Naive thymus-derived CD4-positive, alpha-beta T cell (primary cell): ENCODE measurements at regions of chr9 and their contacts with region 1.

Region 1: GRCh38 chr9:89000973-89001916 is 10.0 kb downstream of the S1PR3 start:
- DNase-seq: peak; percentile 55 to 79 (median 72)
- ATAC-seq: peak; percentile 78
- H3K4me3 ChIP-seq: no peak overlapping the region
- H3K4me3 Mint-ChIP-seq: peak overlapping the region in 2 of 10 donors; percentile 14 to 40
- H3K27ac ChIP-seq: no peak overlapping the region
- H3K27ac Mint-ChIP-seq: no peak overlapping the region
- H3K4me1 ChIP-seq: no peaks in the 10 kb centered on the region
- H3K4me1 Mint-ChIP-seq: peaks cover 4 to 12% (median 6%) of the 10 kb centered on the region in 7 donors
- H3K27me3 ChIP-seq: no peaks in the 10 kb centered on the region
- H3K27me3 Mint-ChIP-seq: peaks cover 6 to 44% (median 25%) of the 10 kb centered on the region in 5 donors

Region 2: GRCh38 chr9:88173378-88173999 is 827.8 kb before region 1 on chr9:
- CTCF ChIA-PET with region 1: no interaction called
- POLR2A ChIA-PET with region 1: no interaction called
- intact Hi-C with region 1: loop called in 1 of 2 experiments (anchors 2 kb)
- DNase-seq: peak in 8 of 9 donors; percentile 28 to 64 (median 52)
- ATAC-seq: peak; percentile 72
- H3K4me3 ChIP-seq: no peak overlapping the region
- H3K4me3 Mint-ChIP-seq: no peak overlapping the region
- H3K27ac ChIP-seq: no peak overlapping the region
- H3K27ac Mint-ChIP-seq: no peak overlapping the region
- H3K4me1 ChIP-seq: no peaks in the 10 kb centered on the region
- H3K4me1 Mint-ChIP-seq: peaks cover 0 to 9% (median 2%) of the 10 kb centered on the region in 7 donors
- H3K27me3 ChIP-seq: no peaks in the 10 kb centered on the region
- H3K27me3 Mint-ChIP-seq: peaks cover 0 to 42% (median 7%) of the 10 kb centered on the region in 5 donors

Region 3: DNA sequence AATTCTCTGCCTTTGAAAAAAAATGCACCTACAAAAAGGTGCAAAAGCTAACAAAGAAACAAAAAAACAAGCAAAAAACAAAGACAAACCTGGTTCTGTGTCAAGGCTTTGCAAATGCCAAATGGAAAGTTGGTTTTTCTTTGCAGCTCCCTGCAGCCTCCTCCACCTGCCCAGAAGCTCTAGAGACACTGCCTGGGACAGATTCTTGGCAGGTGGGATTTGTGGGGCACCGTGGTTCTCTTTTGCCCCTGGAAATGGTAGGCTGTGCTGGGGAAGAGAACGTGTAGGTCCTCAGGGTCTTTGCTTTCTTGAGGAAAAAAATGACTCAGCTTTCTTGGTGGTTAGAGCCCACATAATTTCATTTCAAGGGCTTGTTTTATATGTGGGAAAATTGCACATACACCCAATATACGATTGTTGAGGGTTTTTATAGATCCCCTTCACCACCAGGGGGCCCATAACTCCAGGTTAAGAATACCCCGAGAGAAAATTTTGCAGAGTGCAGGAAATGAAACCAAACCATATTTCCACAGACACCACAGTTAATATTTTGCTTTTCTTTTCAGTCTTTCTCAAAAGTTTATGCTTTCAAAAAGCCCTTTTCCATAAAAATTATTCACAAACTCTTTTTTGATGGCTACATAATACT is 407.6 kb before region 1 on chr9:
- CTCF ChIA-PET with region 1: interaction called, 9 read pairs
- POLR2A ChIA-PET with region 1: no interaction called
- intact Hi-C with region 1: loop called in 1 of 2 experiments (anchors 1 kb)
- DNase-seq: peak in 8 of 9 donors; percentile 32 to 69 (median 64)
- ATAC-seq: peak; percentile 72
- H3K4me3 ChIP-seq: no peak overlapping the region
- H3K4me3 Mint-ChIP-seq: no peak overlapping the region
- H3K27ac ChIP-seq: no peak overlapping the region
- H3K27ac Mint-ChIP-seq: no peak overlapping the region
- H3K4me1 ChIP-seq: no peaks in the 10 kb centered on the region
- H3K4me1 Mint-ChIP-seq: peaks cover 0 to 9% (median 0%) of the 10 kb centered on the region in 7 donors
- H3K27me3 ChIP-seq: no peaks in the 10 kb centered on the region
- H3K27me3 Mint-ChIP-seq: peaks cover 8 to 29% (median 16%) of the 10 kb centered on the region in 5 donors

Region 4: DNA sequence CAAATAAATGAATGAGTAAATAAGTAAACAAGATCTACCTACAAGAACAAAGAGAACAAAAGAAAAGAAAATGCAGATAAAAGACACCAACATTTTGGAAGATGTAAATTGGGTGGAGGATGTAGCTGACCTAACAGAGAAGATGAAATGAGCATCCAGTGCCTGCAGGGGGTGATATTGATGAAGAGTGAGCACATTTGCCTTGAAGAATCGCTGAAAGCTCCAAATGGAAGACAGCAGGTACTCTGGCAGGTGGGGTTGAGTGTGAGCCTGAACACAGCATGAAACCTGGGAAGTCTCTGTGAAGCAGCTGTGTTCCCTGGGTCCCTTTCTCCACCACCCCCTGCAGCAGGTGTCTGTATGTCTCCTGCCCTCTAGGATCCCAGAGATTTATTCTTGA is 340.6 kb before region 1 on chr9:
- CTCF ChIA-PET with region 1: interaction called, 3 read pairs
- POLR2A ChIA-PET with region 1: no interaction called
- intact Hi-C with region 1: loop called (anchors 5 to 10 kb)
- DNase-seq: no peak
- ATAC-seq: no peak
- H3K4me3 ChIP-seq: no peak overlapping the region
- H3K4me3 Mint-ChIP-seq: no peak overlapping the region
- H3K27ac ChIP-seq: no peak overlapping the region
- H3K27ac Mint-ChIP-seq: no peak overlapping the region
- H3K4me1 ChIP-seq: no peaks in the 10 kb centered on the region
- H3K4me1 Mint-ChIP-seq: no peaks in the 10 kb centered on the region
- H3K27me3 ChIP-seq: no peaks in the 10 kb centered on the region
- H3K27me3 Mint-ChIP-seq: peaks cover 5 to 19% (median 12%) of the 10 kb centered on the region in 5 donors

Region 5: GRCh38 chr9:88722753-88723152 is 278.5 kb before region 1 on chr9:
- CTCF ChIA-PET with region 1: interaction called, 3 read pairs
- POLR2A ChIA-PET with region 1: no interaction called
- intact Hi-C with region 1: loop called in 1 of 2 experiments (anchors 1 kb)
- DNase-seq: peak in 3 of 9 donors; percentile 3 to 13 (median 8)
- ATAC-seq: no peak
- H3K4me3 ChIP-seq: no peak overlapping the region
- H3K4me3 Mint-ChIP-seq: no peak overlapping the region
- H3K27ac ChIP-seq: no peak overlapping the region
- H3K27ac Mint-ChIP-seq: no peak overlapping the region
- H3K4me1 ChIP-seq: no peaks in the 10 kb centered on the region
- H3K4me1 Mint-ChIP-seq: no peaks in the 10 kb centered on the region
- H3K27me3 ChIP-seq: no peaks in the 10 kb centered on the region
- H3K27me3 Mint-ChIP-seq: peaks cover 13 to 48% (median 27%) of the 10 kb centered on the region in 5 donors

Region 6: DNA sequence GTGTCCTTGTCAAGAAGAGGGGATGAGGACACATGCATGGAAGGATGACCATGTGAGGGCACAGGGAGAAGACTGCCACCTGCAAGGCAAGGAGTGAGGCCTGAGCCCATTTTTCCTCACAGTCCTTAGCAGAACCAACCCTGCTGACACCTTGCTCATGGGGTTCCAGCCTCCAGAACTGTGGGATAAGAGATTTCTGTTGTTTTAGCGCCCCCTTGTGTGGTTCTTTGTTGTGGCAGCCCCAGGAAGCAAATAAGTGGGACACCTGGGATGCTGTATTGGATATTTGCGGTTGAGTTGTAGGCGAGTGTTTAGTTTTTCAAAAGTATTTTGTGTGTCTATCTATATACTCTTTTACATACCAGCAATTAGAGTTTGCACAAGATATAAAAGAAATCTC is 259.9 kb before region 1 on chr9:
- CTCF ChIA-PET with region 1: no interaction called
- POLR2A ChIA-PET with region 1: no interaction called
- intact Hi-C with region 1: loop called in 1 of 2 experiments (anchors 5 kb)
- DNase-seq: no peak
- ATAC-seq: no peak
- H3K4me3 ChIP-seq: no peak overlapping the region
- H3K4me3 Mint-ChIP-seq: no peak overlapping the region
- H3K27ac ChIP-seq: no peak overlapping the region
- H3K27ac Mint-ChIP-seq: no peak overlapping the region
- H3K4me1 ChIP-seq: no peaks in the 10 kb centered on the region
- H3K4me1 Mint-ChIP-seq: no peaks in the 10 kb centered on the region
- H3K27me3 ChIP-seq: no peaks in the 10 kb centered on the region
- H3K27me3 Mint-ChIP-seq: peaks cover 10 to 27% (median 22%) of the 10 kb centered on the region in 5 donors

Region 7: DNA sequence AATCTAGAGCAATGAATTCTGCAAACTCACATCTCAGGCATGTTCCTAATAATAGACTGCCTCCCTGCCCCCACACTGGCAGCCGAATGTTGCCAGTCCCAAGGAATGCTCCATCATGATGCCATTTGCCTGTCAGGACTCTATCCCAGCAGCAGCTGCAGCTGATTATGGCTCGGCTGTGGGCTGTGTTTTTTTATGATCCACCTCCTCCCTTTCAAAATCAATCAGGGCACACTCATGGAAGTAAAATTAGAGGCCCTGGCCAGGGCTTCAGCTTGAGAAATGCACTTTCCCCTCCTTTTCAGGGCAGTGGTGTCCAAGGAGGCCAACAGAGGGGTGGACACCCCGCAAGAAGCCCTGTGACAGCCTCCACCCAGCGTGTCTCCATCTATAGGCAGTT is 186.7 kb before region 1 on chr9:
- CTCF ChIA-PET with region 1: no interaction called
- POLR2A ChIA-PET with region 1: no interaction called
- intact Hi-C with region 1: loop called in 1 of 2 experiments (anchors 2 kb)
- DNase-seq: no peak
- ATAC-seq: no peak
- H3K4me3 ChIP-seq: no peak overlapping the region
- H3K4me3 Mint-ChIP-seq: no peak overlapping the region
- H3K27ac ChIP-seq: no peak overlapping the region
- H3K27ac Mint-ChIP-seq: no peak overlapping the region
- H3K4me1 ChIP-seq: no peaks in the 10 kb centered on the region
- H3K4me1 Mint-ChIP-seq: peaks cover 0 to 6% (median 0%) of the 10 kb centered on the region in 7 donors
- H3K27me3 ChIP-seq: no peaks in the 10 kb centered on the region
- H3K27me3 Mint-ChIP-seq: peaks cover 10 to 39% (median 32%) of the 10 kb centered on the region in 5 donors

Region 8: GRCh38 chr9:89204801-89205200 is 203.6 kb after region 1 on chr9:
- CTCF ChIA-PET with region 1: no interaction called
- POLR2A ChIA-PET with region 1: no interaction called
- intact Hi-C with region 1: no loop called
- DNase-seq: no peak
- ATAC-seq: no peak
- H3K4me3 ChIP-seq: no peak overlapping the region
- H3K4me3 Mint-ChIP-seq: no peak overlapping the region
- H3K27ac ChIP-seq: no peak overlapping the region
- H3K27ac Mint-ChIP-seq: no peak overlapping the region
- H3K4me1 ChIP-seq: no peaks in the 10 kb centered on the region
- H3K4me1 Mint-ChIP-seq: no peaks in the 10 kb centered on the region
- H3K27me3 ChIP-seq: no peaks in the 10 kb centered on the region
- H3K27me3 Mint-ChIP-seq: peaks cover 0 to 4% (median 0%) of the 10 kb centered on the region in 5 donors